ENCODE measurements at regions of chr16 and their contacts with region 1.

Region 1: DNA sequence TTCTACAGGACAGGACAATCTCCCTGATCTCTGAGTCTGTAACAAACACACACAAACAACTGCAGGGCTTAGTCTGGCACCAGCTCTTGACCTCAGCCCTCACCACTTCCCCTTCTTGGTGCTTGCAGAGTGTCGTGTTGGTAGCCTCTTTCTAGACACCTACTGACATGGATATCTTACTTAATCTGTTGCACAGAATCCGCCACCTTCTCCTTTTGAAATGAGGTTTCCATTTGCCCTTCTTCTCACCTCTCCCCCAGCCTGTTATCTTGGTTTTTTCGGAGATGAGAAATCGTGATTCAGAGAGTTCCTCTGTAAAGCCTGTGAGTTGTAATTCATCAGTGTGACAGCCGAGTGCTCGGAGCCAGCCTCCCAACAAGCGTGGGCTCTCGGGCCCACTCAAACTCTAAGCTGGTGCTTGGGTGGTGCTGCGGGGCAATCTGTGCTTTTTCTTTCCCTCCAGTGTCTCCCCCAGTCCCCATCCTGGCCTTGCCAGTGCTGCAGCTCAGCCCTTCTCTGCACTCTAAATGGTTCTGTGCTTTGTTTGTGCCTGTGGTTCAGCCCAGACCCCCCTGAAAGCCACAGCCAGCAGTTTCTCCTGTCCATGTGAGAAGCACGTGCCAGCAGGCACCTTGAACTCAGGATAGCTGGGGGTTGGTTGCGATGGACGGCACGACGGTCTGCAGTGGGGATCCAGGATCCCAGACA is 28.1 kb downstream of the KIAA0513 start:
- DNase-seq: peak; percentile 43
- H3K4me3 ChIP-seq: peak overlapping the region; percentile 28 to 63; a peak in 3 of 4 replicates
- H3K27ac ChIP-seq: peak overlapping the region; percentile 60 to 70
- H3K4me1 ChIP-seq: peaks cover 8 to 14% of the 10 kb centered on the region in 2 experiments; a peak in 3 of 4 replicates
- H3K27me3 ChIP-seq: no peaks in the 10 kb centered on the region
- CTCF ChIP-seq: no peak
- EP300 ChIP-seq: peak in 1 of 2 experiments; percentile 59; a peak in 1 of 4 replicates
- RAD21 ChIP-seq: no peak

Region 2: DNA sequence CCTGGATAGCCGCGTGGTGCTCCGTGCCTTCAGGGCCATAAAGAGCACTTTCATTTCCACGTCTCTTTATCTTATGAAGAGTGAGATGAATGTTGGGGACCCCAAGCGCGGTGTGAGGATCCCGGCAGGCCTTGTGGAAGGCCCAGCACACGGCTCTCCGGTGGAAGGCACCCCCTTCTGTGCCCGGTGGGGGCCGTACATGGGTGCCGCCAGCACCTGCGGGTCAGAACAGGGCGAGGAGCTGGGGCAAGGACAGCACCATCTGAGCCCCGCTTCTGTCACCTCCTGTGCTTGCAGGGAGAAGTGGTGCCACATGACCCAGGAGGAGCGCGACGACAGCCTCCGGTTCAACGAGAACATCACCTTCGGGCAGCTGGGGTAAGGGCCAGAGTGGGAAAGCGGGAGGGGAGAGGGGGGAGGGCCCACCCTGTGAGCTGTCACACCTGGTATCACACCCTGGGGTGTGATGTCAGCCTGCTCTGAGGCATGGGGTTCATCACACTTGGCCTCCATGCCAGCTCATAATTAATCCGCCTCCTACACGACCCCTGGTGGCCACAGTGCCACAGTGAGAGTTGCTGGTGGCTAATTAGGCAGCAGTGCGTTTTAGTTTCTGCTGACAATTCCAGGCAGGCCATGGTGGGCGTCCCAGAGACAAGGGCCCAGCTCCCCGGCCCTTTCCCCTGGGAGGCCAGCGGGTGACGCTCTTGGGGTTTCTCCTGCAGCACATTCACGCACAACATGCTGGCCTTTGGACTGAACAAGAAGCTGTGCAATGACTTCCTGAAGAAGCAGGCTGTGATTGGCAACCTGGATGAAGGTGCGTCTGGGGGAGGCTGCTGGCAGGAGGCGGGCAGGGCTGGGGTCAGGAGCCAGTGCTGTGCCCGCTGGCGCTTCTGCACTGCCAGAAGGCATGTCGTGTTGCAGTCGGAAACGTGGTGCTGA is 31.0 kb after region 1 on chr16:
- CTCF ChIA-PET with region 1: interaction called, 11 read pairs
- POLR2A ChIA-PET with region 1: no interaction called
- DNase-seq: peak; percentile 83
- H3K4me3 ChIP-seq: no peak overlapping the region; a peak in 1 of 4 replicates
- H3K27ac ChIP-seq: no peak overlapping the region
- H3K4me1 ChIP-seq: peaks cover 0 to 11% of the 10 kb centered on the region in 2 experiments; a peak in 1 of 4 replicates
- H3K27me3 ChIP-seq: no peaks in the 10 kb centered on the region
- CTCF ChIP-seq: peak; percentile 62
- EP300 ChIP-seq: no peak
- RAD21 ChIP-seq: peak; percentile 56